ENCODE measurements at regions of chr7 and their contacts with region 1.

Region 1: GRCh38 chr7:31735991-31736982 is 49.3 kb downstream of the PPP1R17 start:
- DNase-seq: no peak
- ATAC-seq: peak; percentile 79
- H3K4me3 ChIP-seq: no peak overlapping the region
- H3K27ac ChIP-seq: no peak overlapping the region
- H3K4me1 ChIP-seq: no peaks in the 10 kb centered on the region
- H3K27me3 ChIP-seq: no peaks in the 10 kb centered on the region; a peak in 1 of 4 replicates
- CTCF ChIP-seq: peak; percentile 82 to 90 (median 86)
- EP300 ChIP-seq: no peak
- POLR2A ChIP-seq: no peak
- RAD21 ChIP-seq: peak; percentile 84

Region 2: DNA sequence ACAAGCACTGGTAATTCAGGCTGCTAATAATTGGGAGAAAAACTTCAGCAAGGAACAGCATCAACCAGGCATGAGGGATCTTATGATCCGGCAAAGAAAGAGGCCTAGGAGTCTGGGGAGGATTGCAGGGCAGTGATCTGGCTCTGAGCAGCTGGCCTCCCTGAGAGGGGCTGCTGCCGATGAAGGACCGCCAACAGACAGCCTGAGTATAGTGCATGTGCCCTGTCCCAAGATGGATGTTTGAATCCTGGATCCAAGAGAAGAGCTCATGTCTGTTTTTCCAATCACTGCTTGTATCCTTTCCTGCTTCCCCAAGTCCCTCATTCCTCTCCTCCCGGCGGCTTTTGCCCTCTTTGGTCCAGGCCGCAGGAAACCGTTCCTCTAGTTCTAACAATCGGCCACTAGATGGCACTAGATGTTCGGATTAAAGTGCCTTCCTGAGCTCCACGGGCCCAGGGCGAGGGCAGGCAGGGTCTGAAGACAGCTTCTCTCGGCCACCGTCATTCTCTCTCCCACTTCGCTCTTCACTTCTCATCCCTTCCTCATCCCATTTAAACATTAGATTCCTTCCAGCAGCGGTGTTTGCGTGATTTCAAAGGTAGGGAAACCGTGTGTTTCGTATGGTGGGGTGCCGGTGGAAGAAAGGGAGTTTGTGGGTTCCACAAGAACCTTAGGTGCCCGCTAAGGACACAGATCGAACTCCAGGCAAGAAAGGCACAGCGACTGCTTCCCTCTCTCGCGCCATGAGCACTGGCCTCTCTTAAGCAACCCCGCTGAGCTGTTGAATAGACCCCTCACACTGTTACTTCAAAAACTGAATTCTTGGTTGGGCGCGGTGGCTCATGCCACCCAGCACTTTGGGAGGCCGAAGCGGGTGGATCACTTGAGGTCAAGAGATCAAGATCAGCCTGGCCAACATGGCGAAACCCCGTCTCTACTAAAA is 601.8 kb before region 1 on chr7:
- CTCF ChIA-PET with region 1: interaction called, 7 read pairs
- POLR2A ChIA-PET with region 1: no interaction called
- RAD21 ChIA-PET with region 1: interaction called, 5 read pairs
- SMC1A ChIA-PET with region 1: interaction called, 4 read pairs
- in situ Hi-C with region 1: loop called (anchors 5 kb)
- intact Hi-C with region 1: loop called (anchors 1 kb)
- DNase-seq: no peak
- ATAC-seq: peak; percentile 97
- H3K4me3 ChIP-seq: no peak overlapping the region
- H3K27ac ChIP-seq: no peak overlapping the region
- H3K4me1 ChIP-seq: no peaks in the 10 kb centered on the region
- H3K27me3 ChIP-seq: no peaks in the 10 kb centered on the region
- CTCF ChIP-seq: peak; percentile 61 to 75 (median 63)
- EP300 ChIP-seq: no peak
- POLR2A ChIP-seq: no peak
- RAD21 ChIP-seq: peak; percentile 80

Region 3: DNA sequence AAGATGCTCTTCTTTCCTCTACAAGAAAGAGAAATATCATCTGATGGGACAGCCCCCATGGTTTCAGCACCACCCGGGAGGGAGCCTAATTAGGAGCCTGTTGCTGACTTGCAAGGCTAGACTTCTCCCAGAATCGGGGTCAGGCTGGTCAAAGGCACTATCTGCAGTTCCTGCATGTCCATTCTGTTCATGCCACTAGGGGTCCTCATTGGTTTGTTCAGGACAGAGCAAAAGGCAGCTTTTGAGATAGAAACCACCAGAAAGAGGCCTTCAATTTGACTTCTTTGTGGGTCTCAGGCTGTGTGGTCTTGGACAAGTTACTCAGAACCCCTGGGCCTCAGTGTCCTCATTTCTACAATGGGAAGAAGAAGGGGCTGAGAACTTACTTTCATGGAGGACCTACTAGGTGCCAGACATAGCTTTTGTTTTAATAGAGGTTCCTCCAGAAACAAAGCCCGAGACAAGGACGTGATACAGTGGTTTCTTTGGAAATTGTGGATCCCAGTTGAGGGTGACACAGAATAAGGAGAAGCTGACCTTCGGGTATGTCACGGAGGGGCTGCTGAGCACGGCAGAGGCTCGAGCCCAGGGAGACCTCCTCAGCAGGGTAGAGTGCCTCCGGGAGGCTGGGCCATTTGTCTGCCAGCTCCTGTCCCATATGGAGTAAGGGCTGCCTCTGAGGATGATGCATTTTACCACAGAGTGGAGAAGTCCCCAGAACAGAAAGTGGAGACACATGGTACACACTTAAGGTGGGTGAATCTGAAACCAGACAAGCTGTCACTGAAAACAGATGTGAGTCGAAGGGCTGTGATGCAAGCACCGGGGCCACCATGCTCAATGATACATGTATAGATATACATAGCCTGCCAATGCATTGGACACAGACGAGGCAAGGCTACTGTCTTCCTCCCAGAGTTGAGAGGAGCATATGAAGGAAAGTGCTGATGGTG is 362.7 kb before region 1 on chr7:
- CTCF ChIA-PET with region 1: interaction called, 6 read pairs
- POLR2A ChIA-PET with region 1: no interaction called
- RAD21 ChIA-PET with region 1: no interaction called
- SMC1A ChIA-PET with region 1: no interaction called
- in situ Hi-C with region 1: no loop called
- intact Hi-C with region 1: loop called (anchors 1 kb)
- DNase-seq: no peak
- ATAC-seq: peak; percentile 95
- H3K4me3 ChIP-seq: no peak overlapping the region
- H3K27ac ChIP-seq: no peak overlapping the region
- H3K4me1 ChIP-seq: no peaks in the 10 kb centered on the region
- H3K27me3 ChIP-seq: peaks cover 0 to 6% of the 10 kb centered on the region in 2 experiments; a peak in 1 of 4 replicates
- CTCF ChIP-seq: peak; percentile 60 to 77 (median 71)
- EP300 ChIP-seq: no peak
- POLR2A ChIP-seq: no peak
- RAD21 ChIP-seq: peak; percentile 63

Region 4: DNA sequence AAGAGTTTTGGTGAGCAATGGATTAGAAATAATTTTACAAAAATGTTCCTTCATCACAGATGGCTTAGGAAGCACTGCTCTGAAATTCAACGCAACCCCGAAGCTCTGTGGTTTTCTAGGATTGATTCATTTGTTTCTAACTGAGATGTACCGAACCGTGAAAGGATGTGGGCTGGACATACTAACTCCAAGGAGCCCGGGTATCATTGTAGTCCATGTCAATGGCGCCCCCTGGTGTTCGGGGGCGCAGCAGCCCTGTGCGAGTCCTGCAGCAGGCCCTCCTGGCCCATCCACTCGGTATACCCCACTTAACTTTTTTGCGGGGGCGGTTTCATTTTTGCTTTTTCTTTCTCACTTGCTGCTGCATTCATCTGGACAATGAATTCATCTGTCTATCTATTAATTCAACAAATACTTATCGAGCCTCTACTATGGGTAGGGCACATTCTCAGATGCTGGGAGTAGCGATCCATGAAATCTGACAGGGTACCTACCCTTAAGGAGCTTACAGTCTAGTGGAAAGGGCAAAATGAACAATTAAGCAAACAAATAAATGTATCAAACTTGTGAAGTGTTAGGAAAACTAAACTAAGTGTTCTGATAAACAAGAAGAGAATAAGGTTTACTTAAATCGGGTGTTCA is 247.6 kb before region 1 on chr7:
- CTCF ChIA-PET with region 1: no interaction called
- POLR2A ChIA-PET with region 1: no interaction called
- RAD21 ChIA-PET with region 1: no interaction called
- SMC1A ChIA-PET with region 1: no interaction called
- in situ Hi-C with region 1: no loop called
- intact Hi-C with region 1: loop called (anchors 2 kb)
- DNase-seq: peak; percentile 34
- ATAC-seq: peak; percentile 100
- H3K4me3 ChIP-seq: no peak overlapping the region
- H3K27ac ChIP-seq: no peak overlapping the region
- H3K4me1 ChIP-seq: 0 out of 2 replicates have a peak, but pooled peaks cover 3% of the 10 kb centered on the region
- H3K27me3 ChIP-seq: no peaks in the 10 kb centered on the region
- CTCF ChIP-seq: peak; percentile 71 to 90 (median 89)
- EP300 ChIP-seq: no peak
- POLR2A ChIP-seq: no peak
- RAD21 ChIP-seq: peak; percentile 69

Region 5: DNA sequence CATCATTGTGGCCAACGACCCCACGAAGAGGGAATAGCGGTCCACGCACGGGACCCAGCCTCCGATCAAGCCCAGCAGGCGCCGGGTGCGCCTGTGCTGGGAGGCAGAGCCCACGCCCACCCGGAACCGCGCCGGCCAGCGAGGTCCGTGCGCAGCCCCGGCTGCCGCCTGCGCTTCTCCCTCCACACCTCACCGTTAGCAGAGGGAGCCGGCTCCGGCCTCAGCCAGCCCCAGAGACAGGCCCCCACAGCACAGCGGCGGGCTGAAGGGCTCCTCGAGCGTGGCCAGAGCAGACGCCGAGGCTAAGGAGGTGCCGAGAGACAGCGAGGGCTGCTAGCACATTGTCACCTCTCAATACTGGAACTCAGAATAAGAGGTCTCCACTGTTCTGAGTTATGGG is 218.8 kb before region 1 on chr7:
- CTCF ChIA-PET with region 1: no interaction called
- POLR2A ChIA-PET with region 1: no interaction called
- RAD21 ChIA-PET with region 1: no interaction called
- SMC1A ChIA-PET with region 1: no interaction called
- in situ Hi-C with region 1: no loop called
- intact Hi-C with region 1: no loop called
- DNase-seq: no peak
- ATAC-seq: no peak
- H3K4me3 ChIP-seq: no peak overlapping the region
- H3K27ac ChIP-seq: no peak overlapping the region
- H3K4me1 ChIP-seq: no peaks in the 10 kb centered on the region
- H3K27me3 ChIP-seq: no peaks in the 10 kb centered on the region
- CTCF ChIP-seq: no peak
- EP300 ChIP-seq: no peak
- POLR2A ChIP-seq: no peak
- RAD21 ChIP-seq: no peak

Region 6: GRCh38 chr7:31648288-31648687 is 88.0 kb before region 1 on chr7:
- CTCF ChIA-PET with region 1: interaction called, 9 read pairs
- POLR2A ChIA-PET with region 1: no interaction called
- RAD21 ChIA-PET with region 1: no interaction called
- SMC1A ChIA-PET with region 1: interaction called, 4 read pairs
- in situ Hi-C with region 1: no loop called
- intact Hi-C with region 1: loop called (anchors 1 kb)
- DNase-seq: no peak
- ATAC-seq: no peak
- H3K4me3 ChIP-seq: no peak overlapping the region
- H3K27ac ChIP-seq: no peak overlapping the region
- H3K4me1 ChIP-seq: no peaks in the 10 kb centered on the region
- H3K27me3 ChIP-seq: peaks cover 1 to 4% of the 10 kb centered on the region in 2 experiments; a peak in 3 of 4 replicates
- CTCF ChIP-seq: no peak
- EP300 ChIP-seq: no peak
- POLR2A ChIP-seq: no peak
- RAD21 ChIP-seq: no peak

Region 7: DNA sequence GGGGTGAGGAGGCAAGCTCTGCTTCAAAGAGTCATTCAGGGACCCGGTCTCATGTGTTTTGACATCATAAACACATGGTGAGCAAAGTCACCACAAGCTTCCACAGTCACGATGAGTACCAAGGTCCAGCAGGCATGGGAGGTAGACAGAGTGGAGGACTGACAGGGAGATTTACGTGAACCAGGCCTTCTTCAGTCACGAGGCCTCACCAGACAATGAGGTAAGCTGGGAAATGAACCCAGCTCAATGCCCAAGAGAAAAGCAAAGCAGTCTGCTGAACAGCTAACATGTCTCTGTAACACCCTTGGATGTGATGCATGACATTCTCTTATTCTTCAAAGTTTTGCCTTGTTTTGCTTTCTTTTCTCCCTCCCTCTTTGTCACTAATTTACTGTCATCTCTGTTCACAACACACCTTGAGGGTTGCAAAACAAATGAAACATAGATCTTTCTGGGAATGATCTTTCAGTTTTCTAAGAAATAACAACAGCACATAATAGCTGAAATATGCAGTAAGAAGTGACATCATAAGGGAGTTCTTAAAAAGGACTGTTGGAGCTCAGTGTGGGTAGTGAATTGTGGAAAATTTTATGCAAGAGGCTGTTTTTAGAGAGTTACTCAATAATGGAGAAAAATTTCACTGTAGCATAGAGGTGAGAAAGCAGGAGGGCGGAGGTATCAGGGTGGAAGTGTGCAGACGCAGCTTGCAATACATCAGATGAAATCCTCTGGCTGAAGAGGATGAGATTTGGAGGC is 40.2 kb before region 1 on chr7:
- CTCF ChIA-PET with region 1: interaction called, 13 read pairs
- POLR2A ChIA-PET with region 1: no interaction called
- RAD21 ChIA-PET with region 1: interaction called, 5 read pairs
- SMC1A ChIA-PET with region 1: interaction called, 5 read pairs
- in situ Hi-C with region 1: no loop called
- intact Hi-C with region 1: no loop called
- DNase-seq: no peak
- ATAC-seq: peak; percentile 81
- H3K4me3 ChIP-seq: no peak overlapping the region
- H3K27ac ChIP-seq: no peak overlapping the region
- H3K4me1 ChIP-seq: no peaks in the 10 kb centered on the region
- H3K27me3 ChIP-seq: no peaks in the 10 kb centered on the region; a peak in 3 of 4 replicates
- CTCF ChIP-seq: no peak
- EP300 ChIP-seq: no peak
- POLR2A ChIP-seq: no peak
- RAD21 ChIP-seq: no peak